ENCODE measurements at regions of chrX and their contacts with region 1.

Region 1: GRCh38 chrX:123833387-123833786 is 26.5 kb upstream of the XIAP start:
- DNase-seq: peak; percentile 42
- H3K4me3 ChIP-seq: no peak overlapping the region
- H3K27ac ChIP-seq: no peak overlapping the region
- H3K4me1 ChIP-seq: peaks cover 5% of the 10 kb centered on the region
- H3K27me3 ChIP-seq: no peaks in the 10 kb centered on the region
- CTCF ChIP-seq: peak; percentile 64 to 74

Region 2: DNA sequence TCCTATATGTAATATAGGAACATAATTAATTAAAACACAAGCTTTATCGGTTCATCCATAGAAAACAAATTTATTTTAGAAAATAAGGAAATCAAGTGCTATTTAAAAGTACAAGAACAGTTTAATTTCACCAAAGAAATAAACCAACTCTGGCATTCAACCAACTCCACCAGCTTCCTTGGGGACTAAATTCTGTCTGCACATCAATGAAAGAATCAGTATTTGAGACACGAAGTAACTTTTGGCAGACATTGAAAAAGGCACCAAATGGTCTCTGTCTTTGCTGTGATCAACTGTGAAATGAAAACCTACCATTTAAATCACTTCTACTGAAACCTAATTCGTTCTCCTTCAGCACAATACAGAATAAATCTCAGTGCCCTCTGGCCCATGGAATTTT is 1369.0 kb before region 1 on chrX:
- CTCF ChIA-PET with region 1: no interaction called
- dilution Hi-C with region 1: no loop called
- in situ Hi-C with region 1: no loop called
- intact Hi-C with region 1: no loop called
- DNase-seq: no peak
- H3K4me3 ChIP-seq: no peak overlapping the region
- H3K27ac ChIP-seq: no peak overlapping the region
- H3K4me1 ChIP-seq: no peaks in the 10 kb centered on the region
- H3K27me3 ChIP-seq: no peaks in the 10 kb centered on the region
- CTCF ChIP-seq: no peak

Region 3: DNA sequence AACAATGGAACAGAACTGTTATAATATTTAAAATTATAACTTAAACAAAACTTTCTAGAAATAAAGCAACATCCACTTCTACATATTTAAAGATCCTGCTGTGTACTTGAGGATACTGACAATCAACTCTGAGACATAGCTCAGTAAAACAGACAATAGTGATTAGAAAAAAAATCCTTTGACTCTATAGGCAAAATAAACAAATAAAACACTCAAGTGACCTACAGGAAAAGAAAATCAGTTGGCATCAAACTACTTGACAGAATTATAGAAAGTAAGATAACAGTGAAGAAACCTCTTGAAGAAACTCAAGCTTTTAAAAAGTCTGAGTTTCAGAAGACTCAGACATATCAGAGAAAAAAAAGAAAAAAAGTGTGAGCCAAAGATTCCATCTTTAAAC is 44.6 kb before region 1 on chrX:
- CTCF ChIA-PET with region 1: no interaction called
- dilution Hi-C with region 1: no loop called
- in situ Hi-C with region 1: no loop called
- intact Hi-C with region 1: loop called (anchors 2 kb)
- DNase-seq: no peak
- H3K4me3 ChIP-seq: no peak overlapping the region
- H3K27ac ChIP-seq: no peak overlapping the region
- H3K4me1 ChIP-seq: no peaks in the 10 kb centered on the region
- H3K27me3 ChIP-seq: no peaks in the 10 kb centered on the region
- CTCF ChIP-seq: no peak

Region 4: DNA sequence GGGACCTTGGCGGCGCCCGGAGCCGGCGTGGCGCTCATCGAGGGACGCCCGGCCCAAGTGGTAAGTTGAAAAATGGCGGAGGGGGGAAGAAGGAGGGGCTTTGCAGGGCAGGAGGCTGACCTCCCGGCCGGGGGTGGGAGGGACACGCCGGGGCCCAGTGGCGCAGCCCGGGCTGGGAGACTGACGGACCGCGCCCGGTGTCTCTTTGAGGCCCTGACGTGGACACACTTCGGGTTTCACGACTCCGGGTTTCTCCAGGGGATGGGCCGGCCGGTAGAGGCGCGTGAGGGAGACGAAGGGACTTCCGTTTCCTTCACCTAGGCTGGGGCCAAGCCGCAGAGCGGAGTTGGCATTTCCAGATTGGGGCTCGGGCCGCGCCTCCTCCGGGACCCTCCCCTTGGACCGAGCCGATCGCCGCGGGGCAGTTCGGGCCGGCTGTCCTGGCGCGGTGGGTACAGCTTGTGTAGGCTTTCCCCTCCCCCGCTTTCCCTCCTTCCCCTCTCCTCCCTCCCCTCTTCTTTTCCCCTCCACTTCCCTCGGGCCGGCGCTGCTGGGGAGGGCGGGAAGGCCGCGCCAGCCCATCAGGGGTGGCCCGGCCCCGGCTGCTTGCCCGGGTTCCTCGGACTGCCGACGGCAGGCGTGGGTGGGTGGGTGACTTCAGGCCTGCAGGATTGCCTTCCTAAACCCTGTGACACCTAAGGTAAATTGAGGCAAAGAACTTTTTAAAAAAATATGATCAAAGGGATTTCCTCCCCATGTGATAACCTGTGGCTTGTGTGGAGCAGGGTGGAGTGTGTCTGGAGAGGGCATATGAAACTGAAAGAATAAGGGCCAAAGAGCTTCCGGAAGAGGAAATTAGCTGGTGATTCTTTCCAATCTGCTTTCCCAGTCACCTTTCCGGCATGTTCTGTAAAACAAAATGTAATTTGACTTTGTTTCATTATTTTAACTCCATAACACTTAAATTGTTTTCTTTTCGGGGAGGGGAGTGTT is 26.8 kb after region 1 on chrX and contains the start of gene XIAP:
- CTCF ChIA-PET with region 1: no interaction called
- dilution Hi-C with region 1: no loop called
- in situ Hi-C with region 1: no loop called
- intact Hi-C with region 1: loop called (anchors 1 kb)
- DNase-seq: peak; percentile 92
- H3K4me3 ChIP-seq: peak within 1 kb of the TSS; percentile 53 to 61 (median 61)
- H3K27ac ChIP-seq: peak within 1 kb of the TSS; percentile 78
- H3K4me1 ChIP-seq: peaks cover 3% of the 10 kb centered on the region
- H3K27me3 ChIP-seq: no peaks in the 10 kb centered on the region
- CTCF ChIP-seq: no peak
- total RNA-seq, gene XIAP: 23.3 to 43.4 TPM

Region 5: GRCh38 chrX:123960042-123960611 is 126.7 kb after region 1 on chrX:
- CTCF ChIA-PET with region 1: interaction called, 7 read pairs
- dilution Hi-C with region 1: no loop called
- in situ Hi-C with region 1: no loop called
- intact Hi-C with region 1: loop called (anchors 1 kb)
- DNase-seq: peak; percentile 88
- H3K4me3 ChIP-seq: peak overlapping the region; percentile 52 to 73 (median 67)
- H3K27ac ChIP-seq: peak overlapping the region; percentile 82
- H3K4me1 ChIP-seq: no peaks in the 10 kb centered on the region
- H3K27me3 ChIP-seq: no peaks in the 10 kb centered on the region
- CTCF ChIP-seq: peak; percentile 31 to 86

Region 6: GRCh38 chrX:124211312-124211942 is 378.0 kb after region 1 on chrX:
- CTCF ChIA-PET with region 1: no interaction called
- dilution Hi-C with region 1: no loop called
- in situ Hi-C with region 1: no loop called
- intact Hi-C with region 1: loop called (anchors 10 kb)
- DNase-seq: peak; percentile 44
- H3K4me3 ChIP-seq: no peak overlapping the region
- H3K27ac ChIP-seq: no peak overlapping the region
- H3K4me1 ChIP-seq: peaks cover 4% of the 10 kb centered on the region
- H3K27me3 ChIP-seq: no peaks in the 10 kb centered on the region
- CTCF ChIP-seq: peak; percentile 53 to 72